ENCODE measurements at regions of chr3 and their contacts with region 1.

Region 1: GRCh38 chr3:139427283-139427993 is 38.0 kb upstream of the COPB2 start:
- DNase-seq: peak; percentile 42
- H3K4me3 ChIP-seq: no peak overlapping the region
- CTCF ChIP-seq: peak; percentile 56

Region 2: GRCh38 chr3:139389458-139390209 is 37.8 kb before region 1 on chr3 and contains the start of gene COPB2:
- CTCF ChIA-PET with region 1: interaction called, 14 read pairs
- POLR2A ChIA-PET with region 1: no interaction called
- DNase-seq: peak; percentile 94
- H3K4me3 ChIP-seq: peak within 1 kb of the TSS; percentile 97
- CTCF ChIP-seq: no peak

Region 3: GRCh38 chr3:139439278-139439677 is 11.8 kb after region 1 on chr3:
- CTCF ChIA-PET with region 1: interaction called, 11 read pairs
- POLR2A ChIA-PET with region 1: no interaction called
- DNase-seq: no peak
- H3K4me3 ChIP-seq: no peak overlapping the region
- CTCF ChIP-seq: no peak

Measured in AG04449 (cell line).